ENCODE measurements at regions of chr4 and their contacts with region 1.

Region 1: DNA sequence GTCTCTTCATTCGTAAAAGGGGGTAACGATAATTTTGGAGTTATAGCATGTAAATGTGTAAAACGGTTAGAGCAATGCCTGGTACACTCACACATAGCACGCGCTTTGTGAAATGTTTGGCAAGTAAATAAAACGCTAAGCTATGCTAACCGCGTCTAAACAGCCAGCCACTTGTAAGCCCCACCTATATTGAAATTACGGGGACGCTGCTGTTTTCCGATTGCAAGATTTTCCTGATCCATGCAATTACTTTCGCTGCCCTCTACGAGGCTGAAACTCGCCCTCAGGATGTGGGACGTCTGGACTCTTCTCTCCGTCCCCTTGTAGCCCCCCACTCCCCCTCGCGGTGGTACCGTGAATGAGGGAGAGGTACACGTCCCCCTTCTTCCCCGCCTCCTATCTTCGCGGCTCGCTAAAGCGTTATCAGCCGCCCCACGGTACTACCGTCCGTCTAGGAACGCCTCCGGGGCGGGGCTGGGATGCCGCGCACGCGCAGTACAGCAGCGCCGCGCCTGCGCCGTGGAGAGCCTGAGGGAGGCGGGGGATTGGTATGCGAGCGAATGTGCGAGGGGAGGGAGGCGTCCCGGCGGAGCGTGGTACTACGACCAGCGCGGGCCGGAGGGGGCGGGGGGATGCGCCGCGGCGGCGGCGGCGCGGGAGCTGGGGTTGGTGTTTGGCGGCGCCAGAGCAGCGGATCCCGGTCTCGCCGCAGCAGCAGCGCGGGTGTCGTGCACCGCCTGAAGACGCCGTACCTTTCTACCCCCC is at the start of gene STIM2:
- DNase-seq: peak; percentile 96 to 100 (median 99)
- H3K4me3 ChIP-seq: peak within 1 kb of the TSS; percentile 88 to 94
- H3K4me3 Mint-ChIP-seq: peak within 1 kb of the TSS; percentile 94 to 100 (median 98)
- H3K27ac ChIP-seq: peak within 1 kb of the TSS; percentile 89
- H3K27ac Mint-ChIP-seq: peak within 1 kb of the TSS; percentile 98 to 100 (median 99)
- H3K4me1 ChIP-seq: peaks cover 61% of the 10 kb centered on the region
- H3K4me1 Mint-ChIP-seq: peaks cover 43 to 81% (median 54%) of the 10 kb centered on the region in 4 donors
- H3K27me3 ChIP-seq: no peaks in the 10 kb centered on the region
- H3K27me3 Mint-ChIP-seq: peaks cover 0 to 1% of the 10 kb centered on the region in 2 donors
- total RNA-seq, gene STIM2: 84.6 to 91.7 TPM

Region 2: GRCh38 chr4:25913851-25914669 is 946.3 kb before region 1 on chr4 and contains the start of gene SMIM20:
- CTCF ChIA-PET with region 1: no interaction called
- POLR2A ChIA-PET with region 1: no interaction called
- intact Hi-C with region 1: loop called (anchors 1 kb)
- DNase-seq: peak; percentile 90 to 93 (median 93)
- H3K4me3 ChIP-seq: peak within 1 kb of the TSS; percentile 44 to 78
- H3K4me3 Mint-ChIP-seq: peak within 1 kb of the TSS; percentile 92 to 98 (median 96)
- H3K27ac ChIP-seq: peak within 1 kb of the TSS; percentile 82
- H3K27ac Mint-ChIP-seq: peak within 1 kb of the TSS; percentile 97 to 99 (median 98)
- H3K4me1 ChIP-seq: peaks cover 18% of the 10 kb centered on the region
- H3K4me1 Mint-ChIP-seq: peaks cover 12 to 30% (median 20%) of the 10 kb centered on the region in 4 donors
- H3K27me3 ChIP-seq: no peaks in the 10 kb centered on the region
- H3K27me3 Mint-ChIP-seq: no peaks in the 10 kb centered on the region
- total RNA-seq, gene SMIM20: 16.9 to 19.2 TPM

Region 3: GRCh38 chr4:26583865-26584652 is 276.3 kb before region 1 on chr4 and contains the start of gene TBC1D19:
- CTCF ChIA-PET with region 1: interaction called, 5 read pairs
- POLR2A ChIA-PET with region 1: interaction called, 43 read pairs
- intact Hi-C with region 1: loop called (anchors 1 kb)
- DNase-seq: peak; percentile 87 to 90 (median 89)
- H3K4me3 ChIP-seq: peak within 1 kb of the TSS; percentile 44 to 75
- H3K4me3 Mint-ChIP-seq: peak within 1 kb of the TSS; percentile 91 to 99 (median 96)
- H3K27ac ChIP-seq: peak within 1 kb of the TSS; percentile 81
- H3K27ac Mint-ChIP-seq: peak within 1 kb of the TSS; percentile 89 to 99 (median 98)
- H3K4me1 ChIP-seq: peaks cover 17% of the 10 kb centered on the region
- H3K4me1 Mint-ChIP-seq: peaks cover 18 to 38% (median 26%) of the 10 kb centered on the region in 4 donors
- H3K27me3 ChIP-seq: no peaks in the 10 kb centered on the region
- H3K27me3 Mint-ChIP-seq: peaks cover 1 to 2% of the 10 kb centered on the region in 2 donors
- total RNA-seq, gene TBC1D19: 7.9 to 9.5 TPM

Region 4: GRCh38 chr4:26885912-26886274 is 25.6 kb after region 1 on chr4:
- CTCF ChIA-PET with region 1: interaction called, 49 read pairs
- POLR2A ChIA-PET with region 1: interaction called, 250 read pairs
- intact Hi-C with region 1: loop called (anchors 1 kb)
- DNase-seq: peak; percentile 73 to 83 (median 80)
- H3K4me3 ChIP-seq: peak overlapping the region; percentile 36 to 44
- H3K4me3 Mint-ChIP-seq: peak overlapping the region; percentile 75 to 90 (median 85)
- H3K27ac ChIP-seq: peak overlapping the region; percentile 81
- H3K27ac Mint-ChIP-seq: peak overlapping the region; percentile 83 to 99 (median 97)
- H3K4me1 ChIP-seq: peaks cover 78% of the 10 kb centered on the region
- H3K4me1 Mint-ChIP-seq: peaks cover 60 to 91% (median 72%) of the 10 kb centered on the region in 4 donors
- H3K27me3 ChIP-seq: no peaks in the 10 kb centered on the region
- H3K27me3 Mint-ChIP-seq: no peaks in the 10 kb centered on the region

Region 5: GRCh38 chr4:26985873-26986272 is 125.5 kb after region 1 on chr4:
- CTCF ChIA-PET with region 1: interaction called, 3 read pairs
- POLR2A ChIA-PET with region 1: interaction called, 28 read pairs
- intact Hi-C with region 1: loop called (anchors 5 kb)
- DNase-seq: peak; percentile 60 to 70 (median 65)
- H3K4me3 ChIP-seq: no peak overlapping the region
- H3K4me3 Mint-ChIP-seq: peak overlapping the region in 7 of 8 donors; percentile 1 to 77 (median 64)
- H3K27ac ChIP-seq: no peak overlapping the region
- H3K27ac Mint-ChIP-seq: peak overlapping the region in 5 of 7 donors; percentile 25 to 77 (median 42)
- H3K4me1 ChIP-seq: peaks cover 33% of the 10 kb centered on the region
- H3K4me1 Mint-ChIP-seq: peaks cover 36 to 54% (median 44%) of the 10 kb centered on the region in 4 donors
- H3K27me3 ChIP-seq: no peaks in the 10 kb centered on the region
- H3K27me3 Mint-ChIP-seq: no peaks in the 10 kb centered on the region